A549 (cell line): ENCODE measurements at regions of chr10 and their contacts with region 1.

Region 1: GRCh38 chr10:110279407-110279986 is 25.2 kb downstream of the SMNDC1 start:
- DNase-seq: peak; percentile 37 to 69
- ATAC-seq: peak; percentile 74 to 88; a peak in 5 of 6 replicates
- H3K4me3 ChIP-seq: no peak overlapping the region
- H3K27ac ChIP-seq: no peak overlapping the region
- H3K4me1 ChIP-seq: 0 out of 3 replicates have a peak, but pooled peaks cover 2% of the 10 kb centered on the region
- CTCF ChIP-seq: peak; percentile 96
- EP300 ChIP-seq: no peak
- POLR2A ChIP-seq: no peak
- RAD21 ChIP-seq: peak; percentile 91 to 92

Region 2: GRCh38 chr10:110129490-110129889 is 150.0 kb before region 1 on chr10:
- CTCF ChIA-PET with region 1: interaction called, 24 read pairs
- POLR2A ChIA-PET with region 1: no interaction called
- DNase-seq: no peak
- ATAC-seq: no peak
- H3K4me3 ChIP-seq: no peak overlapping the region
- H3K27ac ChIP-seq: no peak overlapping the region
- H3K4me1 ChIP-seq: no peaks in the 10 kb centered on the region
- CTCF ChIP-seq: no peak
- EP300 ChIP-seq: no peak
- POLR2A ChIP-seq: no peak
- RAD21 ChIP-seq: no peak

Region 3: GRCh38 chr10:110163192-110163773 is 116.2 kb before region 1 on chr10:
- CTCF ChIA-PET with region 1: interaction called, 10 read pairs
- POLR2A ChIA-PET with region 1: no interaction called
- DNase-seq: no peak
- ATAC-seq: peak in 1 of 2 experiments; percentile 25; a peak in 2 of 6 replicates
- H3K4me3 ChIP-seq: no peak overlapping the region
- H3K27ac ChIP-seq: no peak overlapping the region
- H3K4me1 ChIP-seq: no peaks in the 10 kb centered on the region
- CTCF ChIP-seq: no peak
- EP300 ChIP-seq: no peak
- POLR2A ChIP-seq: no peak
- RAD21 ChIP-seq: no peak

Region 4: DNA sequence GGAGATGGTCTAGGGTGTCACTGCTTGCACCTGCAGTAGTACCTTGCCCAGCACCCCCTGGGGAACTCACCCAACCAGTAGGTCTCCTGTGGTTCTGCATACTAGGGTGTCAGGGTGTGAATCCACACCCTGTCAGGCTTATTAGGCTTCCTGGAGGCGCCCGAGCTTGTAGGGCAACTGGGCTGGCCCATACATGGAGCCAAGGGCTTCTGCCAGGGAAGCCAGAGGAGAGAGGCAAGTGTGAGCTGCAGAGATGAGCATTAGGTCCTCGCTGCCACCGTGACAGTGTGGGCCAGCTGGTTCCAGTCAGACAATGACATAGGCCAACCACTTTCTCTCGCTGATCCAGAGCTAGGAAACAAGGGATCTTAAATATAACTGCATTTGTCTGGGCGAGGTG is 60.9 kb before region 1 on chr10:
- CTCF ChIA-PET with region 1: interaction called, 11 read pairs
- POLR2A ChIA-PET with region 1: interaction called, 3 read pairs
- DNase-seq: no peak
- ATAC-seq: no peak
- H3K4me3 ChIP-seq: no peak overlapping the region
- H3K27ac ChIP-seq: no peak overlapping the region
- H3K4me1 ChIP-seq: peaks cover 6% of the 10 kb centered on the region; the same call in 1 of the 3 replicates
- CTCF ChIP-seq: no peak
- EP300 ChIP-seq: no peak
- POLR2A ChIP-seq: no peak
- RAD21 ChIP-seq: no peak